ENCODE measurements at regions of chr3 and their contacts with region 1.

Region 1: DNA sequence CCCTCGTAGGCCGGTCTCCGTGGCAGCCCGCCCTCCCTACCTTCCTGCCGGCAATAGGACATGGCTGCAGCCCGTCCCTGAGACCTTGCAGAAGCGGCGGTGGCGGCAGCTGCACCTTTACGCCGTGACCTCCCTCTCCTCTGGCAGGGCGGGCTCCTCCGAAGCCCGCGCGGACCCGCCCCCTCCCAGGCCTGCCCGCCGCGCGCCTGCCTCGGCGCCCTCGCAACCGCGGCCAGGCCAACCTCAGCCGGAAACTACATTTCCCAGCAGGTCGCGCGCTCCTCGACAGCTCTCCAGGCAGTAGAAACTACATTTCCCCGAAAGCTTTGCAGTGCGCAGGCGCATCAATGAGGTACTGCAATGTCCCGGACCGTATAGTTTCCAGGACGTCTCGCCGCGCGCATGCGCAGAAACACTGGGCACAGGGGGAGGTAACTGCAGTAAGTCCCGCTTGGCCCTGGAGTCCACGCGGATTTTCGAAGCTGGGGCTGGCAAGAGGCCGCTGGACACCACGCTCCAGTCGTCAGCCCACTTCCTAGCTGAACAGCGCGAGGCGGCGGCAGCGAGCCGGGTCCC is at the starts of genes CHCHD4 and TMEM43:
- DNase-seq: peak; percentile 100
- ATAC-seq: peak; percentile 96
- H3K4me3 ChIP-seq: peak within 1 kb of the TSS; percentile 60 to 91
- H3K27ac ChIP-seq: peak within 1 kb of the TSS; percentile 88 to 91
- H3K4me1 ChIP-seq: no peaks in the 10 kb centered on the region
- H3K27me3 ChIP-seq: no peaks in the 10 kb centered on the region
- total RNA-seq, gene CHCHD4: 7.5 to 9.4 TPM
- total RNA-seq, gene TMEM43: 110 to 132 TPM

Region 2: GRCh38 chr3:14144423-14145075 is 19.8 kb after region 1 on chr3:
- intact Hi-C with region 1: loop called in 1 of 2 experiments (anchors 1 kb)
- DNase-seq: peak; percentile 79 to 81
- ATAC-seq: peak; percentile 91
- H3K4me3 ChIP-seq: no peak overlapping the region
- H3K27ac ChIP-seq: peak overlapping the region; percentile 89 to 99
- H3K4me1 ChIP-seq: peaks cover 3 to 4% of the 10 kb centered on the region in 2 donors
- H3K27me3 ChIP-seq: no peaks in the 10 kb centered on the region

Region 3: GRCh38 chr3:14178247-14179113 is 53.8 kb after region 1 on chr3 and contains the starts of genes LSM3 and XPC:
- intact Hi-C with region 1: loop called (anchors 1 to 10 kb)
- DNase-seq: peak; percentile 96 to 99
- ATAC-seq: peak; percentile 100
- H3K4me3 ChIP-seq: peak within 1 kb of the TSS; percentile 65 to 85
- H3K27ac ChIP-seq: peak within 1 kb of the TSS; percentile 68 to 97
- H3K4me1 ChIP-seq: peaks cover 0 to 9% of the 10 kb centered on the region in 2 donors
- H3K27me3 ChIP-seq: no peaks in the 10 kb centered on the region
- total RNA-seq, gene LSM3: 7.1 to 9.0 TPM
- total RNA-seq, gene XPC: 29.7 to 36.7 TPM

Region 4: GRCh38 chr3:14234251-14235002 is 109.7 kb after region 1 on chr3:
- intact Hi-C with region 1: no loop called
- DNase-seq: no peak
- ATAC-seq: no peak
- H3K4me3 ChIP-seq: no peak overlapping the region
- H3K27ac ChIP-seq: no peak overlapping the region
- H3K4me1 ChIP-seq: no peaks in the 10 kb centered on the region
- H3K27me3 ChIP-seq: no peaks in the 10 kb centered on the region

Region 5: GRCh38 chr3:14651440-14652251 is 526.9 kb after region 1 on chr3 and contains the start of gene CCDC174:
- intact Hi-C with region 1: loop called in 1 of 2 experiments (anchors 5 kb)
- DNase-seq: peak; percentile 95 to 96
- ATAC-seq: peak; percentile 100
- H3K4me3 ChIP-seq: peak within 1 kb of the TSS; percentile 72 to 91
- H3K27ac ChIP-seq: peak within 1 kb of the TSS in 1 of 2 donors; percentile 85
- H3K4me1 ChIP-seq: peaks cover 0 to 4% of the 10 kb centered on the region in 2 donors
- H3K27me3 ChIP-seq: no peaks in the 10 kb centered on the region
- total RNA-seq, gene CCDC174: 19.3 to 25.2 TPM